Colonic mucosa (tissue), 4 donors: ENCODE measurements at regions of chr7 and their contacts with region 1.

Region 1: DNA sequence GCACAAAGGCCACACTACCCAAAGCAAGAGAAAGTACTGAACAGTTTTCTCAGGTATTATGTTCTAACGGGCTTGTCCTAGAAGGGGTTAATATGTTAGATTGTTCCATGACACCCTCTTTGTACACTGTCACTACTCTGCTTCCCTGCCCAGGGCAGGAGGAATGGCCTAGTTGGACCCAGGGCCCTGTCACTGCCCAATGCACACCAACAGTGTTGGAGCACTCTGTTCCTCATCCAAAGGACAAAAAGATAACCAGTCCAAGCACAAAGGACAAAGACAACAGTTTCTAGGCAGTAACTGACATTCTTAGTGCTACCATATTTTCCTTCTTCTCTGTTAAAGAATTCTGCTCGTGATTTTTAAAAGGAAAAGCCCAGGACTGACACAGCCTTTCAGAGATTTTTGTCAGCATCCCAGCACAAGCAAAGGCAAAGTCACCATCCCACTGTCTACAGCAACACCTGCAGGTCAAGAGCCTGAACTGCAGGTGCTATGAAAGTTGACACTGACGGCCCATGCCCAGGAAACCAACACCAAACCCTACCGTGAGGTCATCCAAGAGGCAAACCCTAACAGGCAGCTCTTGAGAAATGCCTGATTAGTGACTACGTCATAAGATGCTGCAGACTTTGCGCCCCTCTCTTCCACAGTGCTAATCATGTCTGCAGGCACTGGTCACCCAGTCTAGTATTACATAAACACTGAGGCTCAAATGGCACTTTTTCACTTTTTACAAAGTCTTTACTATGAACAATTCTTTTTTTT is 13.2 kb downstream of the NUDCD3 start:
- DNase-seq: peak; percentile 42
- H3K4me3 ChIP-seq: no peak overlapping the region
- H3K27ac ChIP-seq: no peak overlapping the region
- H3K4me1 ChIP-seq: no peaks in the 10 kb centered on the region
- H3K27me3 ChIP-seq: no peaks in the 10 kb centered on the region
- CTCF ChIP-seq: peak; percentile 84

Region 2: DNA sequence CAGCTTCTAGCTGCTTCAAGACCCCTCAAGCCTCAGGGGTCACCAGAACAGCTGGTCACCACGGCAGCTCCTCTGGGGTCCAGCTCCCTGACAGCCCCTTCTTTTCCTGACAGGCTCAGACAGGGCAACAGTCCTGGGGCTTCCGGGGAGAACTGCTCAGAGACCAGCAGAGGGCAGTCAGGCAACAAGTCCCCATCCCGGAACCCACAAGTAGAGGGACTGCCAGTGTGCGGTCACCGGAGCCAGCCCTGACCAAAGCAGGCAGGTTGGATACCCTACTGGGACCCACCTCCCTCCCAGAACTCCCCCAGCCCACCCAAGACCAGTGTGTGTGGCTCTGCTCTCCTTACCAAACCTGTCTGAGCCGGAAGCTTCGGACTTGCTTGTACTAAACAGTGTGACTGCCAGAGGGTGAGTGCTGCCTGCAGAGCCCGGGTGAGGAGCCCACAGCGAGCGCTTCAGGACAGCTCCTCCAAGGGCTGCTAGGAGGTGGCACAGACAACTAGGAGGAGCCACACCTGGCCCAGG is 236.2 kb before region 1 on chr7:
- intact Hi-C with region 1: loop called (anchors 2 kb)
- DNase-seq: peak; percentile 72
- H3K4me3 ChIP-seq: no peak overlapping the region
- H3K27ac ChIP-seq: no peak overlapping the region
- H3K4me1 ChIP-seq: no peaks in the 10 kb centered on the region
- H3K27me3 ChIP-seq: no peaks in the 10 kb centered on the region
- CTCF ChIP-seq: peak; percentile 75

Region 3: GRCh38 chr7:44534501-44534900 is 57.3 kb after region 1 on chr7:
- intact Hi-C with region 1: no loop called
- DNase-seq: peak; percentile 37
- H3K4me3 ChIP-seq: no peak overlapping the region
- H3K27ac ChIP-seq: no peak overlapping the region
- H3K4me1 ChIP-seq: no peaks in the 10 kb centered on the region
- H3K27me3 ChIP-seq: no peaks in the 10 kb centered on the region
- CTCF ChIP-seq: peak; percentile 43

Region 4: GRCh38 chr7:44561962-44562621 is 84.8 kb after region 1 on chr7:
- intact Hi-C with region 1: no loop called
- DNase-seq: peak; percentile 76
- H3K4me3 ChIP-seq: no peak overlapping the region
- H3K27ac ChIP-seq: no peak overlapping the region
- H3K4me1 ChIP-seq: no peaks in the 10 kb centered on the region
- H3K27me3 ChIP-seq: no peaks in the 10 kb centered on the region
- CTCF ChIP-seq: no peak

Region 5: GRCh38 chr7:44999245-45000095 is 522.2 kb after region 1 on chr7:
- intact Hi-C with region 1: no loop called
- DNase-seq: peak; percentile 100
- H3K4me3 ChIP-seq: peak overlapping the region; percentile 47
- H3K27ac ChIP-seq: peak overlapping the region; percentile 88
- H3K4me1 ChIP-seq: no peaks in the 10 kb centered on the region
- H3K27me3 ChIP-seq: no peaks in the 10 kb centered on the region
- CTCF ChIP-seq: no peak